T-cell (primary cell): ENCODE measurements at regions of chr12 and their contacts with region 1.

Region 1: DNA sequence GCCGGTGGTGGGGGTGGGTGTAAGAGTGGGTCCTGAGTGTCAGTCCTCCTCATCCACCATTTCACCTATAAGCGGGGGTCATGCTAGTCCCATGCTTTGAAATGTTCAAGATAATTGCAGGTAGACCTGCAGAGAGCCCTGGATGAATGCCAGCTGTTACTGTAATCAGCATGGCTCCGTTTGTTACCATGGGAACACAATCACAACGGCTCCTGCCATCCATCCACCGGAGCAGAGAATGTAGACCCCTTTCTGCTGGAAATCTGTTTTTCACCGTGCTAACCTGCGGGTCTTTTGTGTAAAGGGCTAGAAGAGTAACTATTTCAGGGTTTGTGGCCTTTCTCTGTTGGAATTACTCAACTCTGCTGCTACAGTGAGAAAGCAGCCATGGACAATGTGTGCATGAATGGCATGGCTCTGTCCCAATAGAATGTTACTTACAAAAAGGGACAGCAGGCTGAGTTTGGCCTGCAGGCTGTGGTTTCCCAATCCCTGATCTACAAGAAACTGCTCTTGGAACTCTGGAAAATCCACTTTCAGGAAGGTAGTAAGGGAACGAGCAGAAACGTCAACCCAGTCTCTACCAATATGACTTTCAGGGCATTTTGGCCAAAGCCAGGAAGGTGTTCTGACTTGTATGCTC is 36.1 kb downstream of the KCTD10 start:
- DNase-seq: no peak
- ATAC-seq: no peak
- H3K4me3 ChIP-seq: no peak overlapping the region
- H3K4me3 Mint-ChIP-seq: no peak overlapping the region
- H3K27ac ChIP-seq: no peak overlapping the region
- H3K27ac Mint-ChIP-seq: no peak overlapping the region
- H3K4me1 ChIP-seq: no peaks in the 10 kb centered on the region
- H3K4me1 Mint-ChIP-seq: no peaks in the 10 kb centered on the region
- H3K27me3 ChIP-seq: no peaks in the 10 kb centered on the region
- H3K27me3 Mint-ChIP-seq: no peaks in the 10 kb centered on the region

Region 2: GRCh38 chr12:109196332-109196731 is 244.6 kb before region 1 on chr12:
- CTCF ChIA-PET with region 1: interaction called in 1 of 2 experiments, 17 read pairs
- POLR2A ChIA-PET with region 1: no interaction called
- DNase-seq: no peak
- ATAC-seq: no peak
- H3K4me3 ChIP-seq: no peak overlapping the region
- H3K4me3 Mint-ChIP-seq: no peak overlapping the region
- H3K27ac ChIP-seq: no peak overlapping the region
- H3K27ac Mint-ChIP-seq: no peak overlapping the region
- H3K4me1 ChIP-seq: no peaks in the 10 kb centered on the region
- H3K4me1 Mint-ChIP-seq: no peaks in the 10 kb centered on the region
- H3K27me3 ChIP-seq: no peaks in the 10 kb centered on the region
- H3K27me3 Mint-ChIP-seq: no peaks in the 10 kb centered on the region

Region 3: DNA sequence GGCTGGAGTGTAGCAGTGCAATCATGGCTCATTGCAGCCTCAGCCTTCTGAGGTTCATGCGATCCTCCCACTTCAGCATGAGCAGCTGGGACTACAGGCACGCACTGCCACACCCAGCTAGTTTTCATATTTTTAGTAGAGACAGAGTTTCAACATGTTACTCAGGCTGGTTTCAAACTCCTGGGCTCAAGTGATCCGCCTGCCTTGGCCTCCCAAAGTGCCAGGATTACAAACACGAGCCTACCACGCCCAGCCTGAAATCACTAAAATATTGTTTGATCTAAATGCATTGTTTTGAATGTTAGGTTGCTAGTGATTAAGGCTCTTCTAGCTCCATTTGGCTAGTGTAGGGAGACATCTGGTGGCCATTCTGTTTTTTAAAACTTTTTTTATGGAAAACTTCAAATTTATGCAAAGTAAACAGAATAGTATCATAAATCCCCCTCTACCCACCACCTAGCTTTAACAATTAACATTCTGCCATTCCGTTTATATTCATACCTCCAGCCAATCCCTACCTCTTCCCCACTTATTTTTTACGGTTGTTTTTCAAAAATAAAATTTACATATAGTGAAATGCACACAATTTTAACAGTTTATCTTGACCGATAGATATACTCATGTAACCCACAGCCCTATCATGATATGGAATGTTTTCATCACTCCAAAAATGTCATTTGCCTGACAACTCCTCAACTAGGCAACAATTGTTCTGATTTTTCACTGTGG is 55.5 kb before region 1 on chr12:
- CTCF ChIA-PET with region 1: no interaction called
- POLR2A ChIA-PET with region 1: no interaction called
- DNase-seq: peak in 1 of 35 experiments; percentile 37
- ATAC-seq: no peak
- H3K4me3 ChIP-seq: no peak overlapping the region
- H3K4me3 Mint-ChIP-seq: no peak overlapping the region
- H3K27ac ChIP-seq: no peak overlapping the region
- H3K27ac Mint-ChIP-seq: peak overlapping the region in 1 of 2 donors; percentile 24
- H3K4me1 ChIP-seq: no peaks in the 10 kb centered on the region
- H3K4me1 Mint-ChIP-seq: no peaks in the 10 kb centered on the region
- H3K27me3 ChIP-seq: peaks cover 0 to 8% of the 10 kb centered on the region in 2 experiments
- H3K27me3 Mint-ChIP-seq: peaks cover 28 to 30% of the 10 kb centered on the region in 2 donors

Region 4: DNA sequence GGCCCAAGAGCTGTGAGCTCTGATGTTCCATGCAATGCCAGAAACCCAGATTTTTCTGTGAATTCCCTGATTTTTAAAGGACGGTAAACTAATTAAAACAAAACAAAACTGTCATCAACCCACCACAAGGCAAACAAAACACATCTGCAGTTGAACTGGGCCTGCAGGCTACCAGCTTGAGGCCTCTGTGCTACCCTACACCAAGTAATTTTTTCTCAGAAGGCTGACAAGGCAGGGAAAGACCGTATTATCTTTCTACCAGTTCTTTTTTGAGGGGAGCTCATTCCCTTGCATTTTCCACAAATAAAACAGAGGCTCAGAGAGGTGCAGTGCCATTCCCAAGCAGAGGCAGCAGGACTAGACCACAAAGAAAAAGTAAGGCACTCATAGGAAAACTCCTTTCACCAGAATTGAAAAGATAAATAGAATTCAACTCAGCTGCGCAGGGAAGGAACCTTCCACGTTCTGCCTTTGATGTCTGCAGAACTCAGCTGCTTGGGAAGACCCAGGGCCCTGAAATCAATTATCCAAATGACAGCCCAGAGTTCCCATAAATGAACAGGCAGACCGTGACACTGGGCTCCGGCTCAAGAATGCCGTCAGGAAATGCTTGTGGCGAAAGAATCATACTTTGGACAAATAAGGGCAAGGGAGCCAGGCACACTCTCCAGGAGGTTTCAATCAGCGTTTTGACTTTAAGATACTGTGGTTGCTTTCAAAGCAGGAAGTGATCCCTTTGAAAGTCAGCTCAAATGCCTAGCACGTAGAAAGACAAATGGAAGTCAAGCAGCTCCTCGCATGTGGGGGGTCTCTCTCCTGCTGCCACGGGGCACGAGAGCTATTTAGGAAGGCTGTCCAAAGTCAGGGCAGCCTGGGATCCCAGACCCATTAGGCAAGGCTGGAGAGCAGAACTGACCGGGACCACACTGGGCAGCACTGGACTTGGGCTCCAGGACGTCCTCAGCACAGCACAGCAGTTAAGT is 22.0 kb after region 1 on chr12:
- CTCF ChIA-PET with region 1: no interaction called
- POLR2A ChIA-PET with region 1: no interaction called
- DNase-seq: peak in 1 of 35 experiments; percentile 19
- ATAC-seq: peak; percentile 37 to 77 (median 73)
- H3K4me3 ChIP-seq: peak overlapping the region in 1 of 2 donors; percentile 7
- H3K4me3 Mint-ChIP-seq: peak overlapping the region; percentile 10 to 65 (median 41)
- H3K27ac ChIP-seq: no peak overlapping the region
- H3K27ac Mint-ChIP-seq: peak overlapping the region; percentile 28 to 74
- H3K4me1 ChIP-seq: peaks cover 17 to 38% of the 10 kb centered on the region in 2 experiments
- H3K4me1 Mint-ChIP-seq: peaks cover 45 to 60% (median 48%) of the 10 kb centered on the region in 3 donors
- H3K27me3 ChIP-seq: no peaks in the 10 kb centered on the region
- H3K27me3 Mint-ChIP-seq: no peaks in the 10 kb centered on the region